ENCODE measurements at regions of chr6 and their contacts with region 1.

Region 1: GRCh38 chr6:42661540-42662153 is 60.8 kb downstream of the PRPH2 start:
- DNase-seq: peak; percentile 77
- ATAC-seq: peak; percentile 98
- H3K4me3 ChIP-seq: no peak overlapping the region
- H3K27ac ChIP-seq: no peak overlapping the region
- H3K4me1 ChIP-seq: peaks cover 3% of the 10 kb centered on the region
- H3K27me3 ChIP-seq: no peaks in the 10 kb centered on the region
- CTCF ChIP-seq: peak; percentile 88

Region 2: DNA sequence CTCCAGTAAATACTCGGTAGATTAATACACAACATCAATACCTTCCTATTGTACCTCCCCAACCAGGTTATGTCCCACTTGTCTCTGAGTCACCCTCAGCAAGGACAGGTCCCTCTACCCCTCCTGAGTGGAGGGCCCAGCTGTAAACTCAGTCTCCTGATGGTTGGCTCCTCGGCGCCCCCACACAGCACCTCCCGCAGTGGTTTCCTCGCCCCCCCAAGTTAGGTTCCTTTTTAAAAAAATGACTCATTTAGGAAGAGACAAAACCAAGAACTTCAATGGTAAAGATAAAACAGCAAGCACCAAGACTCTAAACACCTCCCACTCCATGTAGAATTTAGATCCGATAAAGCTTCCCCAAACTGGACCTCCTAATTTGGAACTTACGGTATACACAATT is 293.5 kb before region 1 on chr6:
- intact Hi-C with region 1: no loop called
- DNase-seq: peak; percentile 32
- ATAC-seq: no peak
- H3K4me3 ChIP-seq: no peak overlapping the region
- H3K27ac ChIP-seq: peak overlapping the region; percentile 74
- H3K4me1 ChIP-seq: peaks cover 16% of the 10 kb centered on the region
- H3K27me3 ChIP-seq: no peaks in the 10 kb centered on the region
- CTCF ChIP-seq: no peak

Region 3: DNA sequence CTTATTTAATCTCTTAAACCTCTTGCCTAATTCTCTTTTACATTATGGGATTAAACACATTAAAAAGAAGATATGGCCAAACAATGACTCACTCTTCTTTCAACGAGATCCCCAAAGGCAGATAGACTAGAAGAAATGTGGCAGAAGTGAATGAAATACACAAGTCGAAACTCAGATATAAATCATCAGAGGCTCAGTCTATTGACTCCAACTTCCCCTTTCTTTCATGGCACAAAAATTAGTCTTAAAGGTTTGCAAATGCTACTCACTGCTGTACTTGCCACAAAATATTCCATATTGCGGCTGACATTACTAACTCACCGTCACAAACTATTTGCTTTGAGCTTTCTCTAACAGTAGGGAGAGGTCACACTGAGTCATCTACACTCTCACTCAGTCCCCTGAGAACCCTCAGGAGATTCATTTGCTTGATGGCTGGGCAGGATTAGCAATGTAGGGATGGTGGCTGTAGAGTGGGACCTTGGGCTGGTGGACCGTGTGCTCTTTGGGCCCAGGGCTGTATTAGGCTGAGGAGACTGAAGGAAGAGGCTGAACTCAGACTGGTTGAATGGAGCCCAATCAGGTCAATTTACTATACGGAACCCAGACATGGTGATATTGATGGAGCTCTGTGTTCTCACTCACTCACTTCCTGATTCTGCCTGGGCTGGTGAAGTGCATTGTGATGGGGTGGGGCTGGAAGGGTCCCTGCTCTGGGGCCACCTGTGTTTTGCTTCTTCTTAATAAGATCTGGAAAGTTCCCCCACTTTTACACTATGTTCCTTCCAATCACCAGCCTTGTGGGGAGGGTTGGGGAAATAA is 140.7 kb before region 1 on chr6:
- intact Hi-C with region 1: no loop called
- DNase-seq: no peak
- ATAC-seq: no peak
- H3K4me3 ChIP-seq: no peak overlapping the region
- H3K27ac ChIP-seq: no peak overlapping the region
- H3K4me1 ChIP-seq: no peaks in the 10 kb centered on the region
- H3K27me3 ChIP-seq: no peaks in the 10 kb centered on the region
- CTCF ChIP-seq: no peak

Region 4: DNA sequence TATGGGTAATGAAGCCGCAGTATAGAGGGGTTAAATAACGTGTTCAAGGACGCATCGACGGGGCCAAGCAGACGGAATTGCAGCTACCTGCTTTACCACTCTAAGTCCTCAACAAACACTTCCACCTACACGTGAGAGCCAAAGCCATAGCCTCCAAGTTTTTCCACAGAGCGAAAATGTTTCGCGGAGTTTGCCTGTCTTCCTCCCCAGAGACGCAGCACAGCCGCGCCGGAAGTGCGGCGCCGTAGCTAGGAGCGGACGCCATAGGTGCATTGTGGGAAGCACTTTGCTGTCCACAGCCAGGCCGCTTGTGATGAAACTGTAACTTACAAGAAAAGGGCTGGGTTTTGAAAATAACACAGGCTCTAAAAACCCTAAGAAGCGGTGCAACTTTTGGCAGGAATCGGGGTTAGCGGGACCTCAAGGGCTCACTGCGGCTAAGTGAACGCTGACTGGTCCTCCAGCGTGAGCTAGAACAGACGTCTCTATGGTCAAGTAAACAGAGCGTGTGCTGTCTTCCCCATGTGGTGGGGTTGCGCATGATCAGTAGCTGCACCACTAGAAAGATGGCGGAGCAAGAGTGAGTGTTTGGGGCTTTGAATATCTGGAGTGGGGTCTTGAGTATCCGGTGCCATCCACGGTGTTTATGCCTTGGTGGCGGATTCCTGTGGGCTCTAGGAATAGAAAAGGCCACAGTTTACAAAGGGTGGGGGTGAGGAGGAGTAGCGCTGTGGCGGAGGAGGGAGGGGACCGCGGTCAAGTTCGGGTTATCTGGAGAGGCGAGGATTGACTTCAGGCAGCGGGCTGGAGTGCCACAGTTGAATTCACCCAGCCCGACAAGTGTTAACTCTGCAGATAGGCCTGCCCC is 218.0 kb after region 1 on chr6 and contains the start of gene RPL7L1:
- intact Hi-C with region 1: loop called (anchors 10 kb)
- DNase-seq: peak; percentile 89
- ATAC-seq: peak; percentile 98
- H3K4me3 ChIP-seq: peak within 1 kb of the TSS; percentile 87
- H3K27ac ChIP-seq: peak within 1 kb of the TSS; percentile 99
- H3K4me1 ChIP-seq: peaks cover 15% of the 10 kb centered on the region
- H3K27me3 ChIP-seq: no peaks in the 10 kb centered on the region
- CTCF ChIP-seq: peak; percentile 14
- total RNA-seq, gene RPL7L1: 64.9 TPM